Activated CD4-positive, alpha-beta T cell treated with anti-CD3 and anti-CD28 coated beads for 36 hours (primary cell): ENCODE measurements at regions of chr1 and their contacts with region 1.

Region 1: GRCh38 chr1:201085916-201086735 is 26.1 kb downstream of the CACNA1S start:
- DNase-seq: peak; percentile 66
- ATAC-seq: peak; percentile 78
- H3K4me3 Mint-ChIP-seq: no peak overlapping the region
- H3K27ac Mint-ChIP-seq: no peak overlapping the region
- H3K4me1 Mint-ChIP-seq: no peaks in the 10 kb centered on the region
- H3K27me3 Mint-ChIP-seq: no peaks in the 10 kb centered on the region

Region 2: GRCh38 chr1:200473698-200474371 is 612.3 kb before region 1 on chr1:
- CTCF ChIA-PET with region 1: no interaction called
- POLR2A ChIA-PET with region 1: no interaction called
- intact Hi-C with region 1: no loop called
- DNase-seq: peak; percentile 55
- ATAC-seq: peak; percentile 80
- H3K4me3 Mint-ChIP-seq: peak overlapping the region; percentile 32
- H3K27ac Mint-ChIP-seq: peak overlapping the region; percentile 48
- H3K4me1 Mint-ChIP-seq: peaks cover 47% of the 10 kb centered on the region
- H3K27me3 Mint-ChIP-seq: peaks cover 8% of the 10 kb centered on the region

Region 3: DNA sequence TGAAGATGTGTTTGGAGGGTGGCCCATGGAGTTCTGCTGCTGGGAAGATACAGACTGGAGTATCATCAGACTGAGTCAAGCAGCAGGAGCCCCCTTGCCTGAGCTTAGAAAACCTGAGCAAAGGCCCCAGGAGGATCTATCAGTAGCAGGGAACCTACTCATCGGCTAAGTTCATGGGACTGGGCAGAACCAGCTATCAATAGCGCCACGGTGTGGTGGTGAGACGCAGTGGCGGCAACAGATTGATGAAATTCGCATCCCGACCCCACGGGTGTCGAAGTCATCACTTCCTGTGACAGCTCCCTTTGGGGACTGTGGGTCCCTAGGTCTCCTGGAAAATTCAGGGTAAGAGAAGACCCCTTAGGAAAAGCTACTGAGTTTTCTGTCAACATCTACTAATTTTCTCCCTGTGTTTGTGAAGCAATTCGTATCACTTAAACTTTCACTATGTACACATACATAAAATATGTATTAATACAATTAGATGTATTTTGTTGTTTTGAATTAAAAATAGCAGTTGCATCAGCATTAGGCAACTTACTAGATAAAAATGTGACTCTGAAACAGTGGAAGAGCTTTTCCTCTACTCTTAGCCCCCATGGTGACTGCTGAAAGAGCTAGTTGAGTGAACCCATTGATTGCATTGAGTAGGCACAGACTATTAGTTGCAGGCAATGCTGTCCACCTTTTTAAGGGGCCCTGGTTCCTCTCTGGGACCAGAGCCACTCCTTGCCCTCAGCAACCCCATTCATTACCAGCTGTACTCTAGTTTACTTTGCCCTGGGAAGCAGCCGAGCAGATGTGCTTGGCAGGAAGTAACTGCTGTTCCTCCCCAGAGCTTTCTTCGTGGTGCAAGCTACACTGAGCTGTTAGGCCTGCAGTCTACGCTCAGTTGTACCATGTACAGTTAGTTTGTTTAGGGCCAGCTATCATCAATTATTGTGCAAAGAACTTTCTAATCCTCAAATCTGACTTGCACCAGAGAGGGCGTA is 33.4 kb after region 1 on chr1:
- CTCF ChIA-PET with region 1: interaction called, 10 read pairs
- POLR2A ChIA-PET with region 1: no interaction called
- intact Hi-C with region 1: loop called (anchors 1 to 2 kb)
- DNase-seq: peak; percentile 82
- ATAC-seq: peak; percentile 66
- H3K4me3 Mint-ChIP-seq: no peak overlapping the region
- H3K27ac Mint-ChIP-seq: no peak overlapping the region
- H3K4me1 Mint-ChIP-seq: peaks cover 4% of the 10 kb centered on the region
- H3K27me3 Mint-ChIP-seq: no peaks in the 10 kb centered on the region

Region 4: GRCh38 chr1:201224666-201225370 is 138.7 kb after region 1 on chr1:
- CTCF ChIA-PET with region 1: interaction called, 3 read pairs
- POLR2A ChIA-PET with region 1: no interaction called
- intact Hi-C with region 1: loop called in 1 of 2 experiments (anchors 5 kb)
- DNase-seq: no peak
- ATAC-seq: no peak
- H3K4me3 Mint-ChIP-seq: no peak overlapping the region
- H3K27ac Mint-ChIP-seq: no peak overlapping the region
- H3K4me1 Mint-ChIP-seq: no peaks in the 10 kb centered on the region
- H3K27me3 Mint-ChIP-seq: no peaks in the 10 kb centered on the region